RWPE1 (cell line): ENCODE measurements at regions of chr14 and their contacts with region 1.

Region 1: GRCh38 chr14:67285876-67286452 is 44.7 kb downstream of the PALS1 start:
- DNase-seq: peak; percentile 34
- H3K27ac ChIP-seq: no peak overlapping the region
- CTCF ChIP-seq: peak; percentile 59

Region 2: GRCh38 chr14:66944872-66945271 is 341.1 kb before region 1 on chr14:
- CTCF ChIA-PET with region 1: no interaction called
- POLR2A ChIA-PET with region 1: no interaction called
- DNase-seq: no peak
- H3K27ac ChIP-seq: no peak overlapping the region
- CTCF ChIP-seq: no peak

Region 3: DNA sequence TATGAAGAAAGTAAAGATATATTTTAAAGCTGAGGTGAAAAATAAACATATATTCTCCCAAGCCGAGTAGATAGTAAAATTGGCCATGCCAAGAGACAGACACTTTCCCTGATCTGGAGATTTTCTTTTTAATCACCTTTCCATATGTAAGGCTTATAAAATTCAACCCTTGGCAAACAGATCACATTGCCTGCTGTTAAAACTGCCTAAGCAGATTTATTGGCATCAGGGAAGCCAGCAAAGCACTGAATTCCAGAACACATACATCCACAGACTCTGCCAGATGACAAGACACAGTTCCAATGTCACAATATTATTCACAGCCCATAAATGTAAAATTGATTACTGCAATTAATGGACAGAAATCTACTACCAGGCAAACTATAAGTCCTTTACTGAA is 174.9 kb before region 1 on chr14:
- CTCF ChIA-PET with region 1: no interaction called
- POLR2A ChIA-PET with region 1: no interaction called
- DNase-seq: no peak
- H3K27ac ChIP-seq: no peak overlapping the region
- CTCF ChIP-seq: no peak

Region 4: GRCh38 chr14:67166450-67166853 is 119.5 kb before region 1 on chr14:
- CTCF ChIA-PET with region 1: interaction called, 14 read pairs
- POLR2A ChIA-PET with region 1: no interaction called
- DNase-seq: peak; percentile 32
- H3K27ac ChIP-seq: no peak overlapping the region
- CTCF ChIP-seq: peak; percentile 84